Right ventricle myocardium superior (tissue), 1 donor: ENCODE measurements at regions of chr6 and their contacts with region 1.

Region 1: GRCh38 chr6:69146385-69146784 is 511.3 kb downstream of the ADGRB3 start:
- DNase-seq: no peak
- ATAC-seq: no peak

Region 2: GRCh38 chr6:68427630-68428029 is 718.8 kb before region 1 on chr6:
- intact Hi-C with region 1: no loop called
- DNase-seq: no peak
- ATAC-seq: no peak

Region 3: DNA sequence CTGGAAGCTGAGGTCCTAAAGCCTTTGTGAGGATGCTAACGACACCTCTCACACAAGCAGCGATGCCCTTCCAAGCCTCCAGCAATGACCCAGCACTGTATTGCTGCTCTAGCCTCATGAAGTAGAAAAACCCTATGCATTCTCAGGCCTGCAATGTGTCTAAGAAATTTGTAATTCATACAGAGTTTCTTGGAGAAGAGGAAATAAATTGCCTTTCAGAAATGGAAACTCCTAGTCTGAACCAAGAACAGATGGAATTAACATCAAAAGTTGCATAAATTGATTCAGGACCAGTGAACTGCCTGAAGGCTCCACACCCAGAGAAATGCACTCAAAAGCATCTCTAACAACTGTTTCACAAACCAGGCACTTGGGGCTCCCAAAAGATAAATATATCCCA is 157.7 kb before region 1 on chr6:
- intact Hi-C with region 1: loop called (anchors 10 kb)
- DNase-seq: no peak
- ATAC-seq: no peak

Region 4: GRCh38 chr6:69026243-69026642 is 120.1 kb before region 1 on chr6:
- intact Hi-C with region 1: no loop called
- DNase-seq: no peak
- ATAC-seq: no peak